WTC11 (cell line): ENCODE measurements at regions of chr12 and their contacts with region 1.

Region 1: DNA sequence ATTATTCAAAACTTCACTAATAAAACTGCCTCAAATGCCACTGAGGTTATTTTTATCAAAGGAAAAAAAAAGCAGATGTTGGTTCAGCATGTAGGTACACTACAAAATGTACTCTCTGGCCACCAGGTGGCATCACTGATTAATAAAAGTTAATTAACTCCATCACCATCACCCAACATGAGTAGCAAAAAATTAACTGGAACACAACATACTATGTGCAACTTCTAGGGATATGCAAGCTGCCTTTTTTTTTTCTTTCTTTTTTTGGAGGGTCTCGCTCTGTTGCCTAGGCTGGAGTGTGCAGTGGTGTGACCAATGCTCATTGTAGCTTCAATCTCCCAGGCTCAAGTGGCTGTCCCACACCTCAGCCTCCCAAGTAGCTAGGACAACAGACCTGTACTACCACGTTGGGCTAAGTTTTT is 43.8 kb upstream of the NR2C1 start:
- DNase-seq: peak; percentile 28
- ATAC-seq: peak; percentile 63
- H3K4me3 Mint-ChIP-seq: no peak overlapping the region
- H3K27ac Mint-ChIP-seq: peak overlapping the region; percentile 65
- H3K4me1 Mint-ChIP-seq: peaks cover 36% of the 10 kb centered on the region
- H3K27me3 Mint-ChIP-seq: no peaks in the 10 kb centered on the region
- CTCF ChIP-seq: peak; percentile 53

Region 2: GRCh38 chr12:95217377-95218149 is 100.4 kb after region 1 on chr12 and contains the starts of genes FGD6 and VEZT:
- CTCF ChIA-PET with region 1: interaction called, 14 read pairs
- POLR2A ChIA-PET with region 1: no interaction called
- DNase-seq: peak; percentile 99
- ATAC-seq: peak; percentile 92
- H3K4me3 Mint-ChIP-seq: peak within 1 kb of the TSS; percentile 97
- H3K27ac Mint-ChIP-seq: peak within 1 kb of the TSS; percentile 100
- H3K4me1 Mint-ChIP-seq: peaks cover 51% of the 10 kb centered on the region
- H3K27me3 Mint-ChIP-seq: no peaks in the 10 kb centered on the region
- CTCF ChIP-seq: no peak
- total RNA-seq, gene FGD6: 24.2 to 28.2 TPM (median 24.4 TPM) in 3 replicates
- total RNA-seq, gene VEZT: 51.5 to 54.5 TPM (median 53.9 TPM) in 3 replicates

Region 3: DNA sequence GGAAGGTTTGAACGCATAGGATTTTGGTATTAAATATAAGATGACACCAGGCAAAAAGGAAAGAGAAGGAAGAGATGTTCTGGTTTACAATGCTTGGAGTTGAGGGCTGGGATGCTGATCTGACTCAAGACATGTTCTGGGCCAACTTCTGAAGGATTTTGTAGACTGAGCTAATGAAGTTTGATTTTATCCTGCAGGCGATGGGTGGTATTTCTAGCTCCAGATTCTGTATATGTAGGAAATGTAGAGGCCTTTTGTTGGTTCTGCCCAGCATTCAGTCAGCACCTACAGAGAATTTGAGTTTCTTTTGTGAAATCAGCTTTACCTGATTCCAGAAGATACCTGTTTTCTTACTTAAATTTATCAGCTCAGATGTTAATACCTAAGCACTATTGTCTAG is 148.6 kb after region 1 on chr12:
- CTCF ChIA-PET with region 1: interaction called, 10 read pairs
- POLR2A ChIA-PET with region 1: no interaction called
- DNase-seq: no peak
- ATAC-seq: no peak
- H3K4me3 Mint-ChIP-seq: no peak overlapping the region
- H3K27ac Mint-ChIP-seq: no peak overlapping the region
- H3K4me1 Mint-ChIP-seq: 0 out of 2 replicates have a peak, but pooled peaks cover 4% of the 10 kb centered on the region
- H3K27me3 Mint-ChIP-seq: no peaks in the 10 kb centered on the region
- CTCF ChIP-seq: no peak

Region 4: GRCh38 chr12:95336390-95337067 is 219.3 kb after region 1 on chr12:
- CTCF ChIA-PET with region 1: interaction called, 18 read pairs
- POLR2A ChIA-PET with region 1: interaction called, 3 read pairs
- DNase-seq: peak; percentile 79
- ATAC-seq: peak; percentile 96
- H3K4me3 Mint-ChIP-seq: no peak overlapping the region; the same call in 1 of the 2 replicates
- H3K27ac Mint-ChIP-seq: peak overlapping the region; percentile 87
- H3K4me1 Mint-ChIP-seq: peaks cover 10% of the 10 kb centered on the region
- H3K27me3 Mint-ChIP-seq: no peaks in the 10 kb centered on the region
- CTCF ChIP-seq: 0 out of 2 replicates have a peak, but pooled peaks have one; percentile 29